Sigmoid colon (tissue), 7 donors: ENCODE measurements at regions of chr9 and their contacts with region 1.

Region 1: GRCh38 chr9:107489687-107490605 is at the start of gene KLF4:
- DNase-seq: peak; percentile 97
- H3K4me3 ChIP-seq: peak within 1 kb of the TSS; percentile 53 to 86 (median 65)
- H3K27ac ChIP-seq: peak within 1 kb of the TSS; percentile 84 to 96 (median 92)
- H3K4me1 ChIP-seq: peaks cover 0 to 38% (median 27%) of the 10 kb centered on the region in 4 donors
- H3K27me3 ChIP-seq: no peaks in the 10 kb centered on the region
- CTCF ChIP-seq: no peak
- EP300 ChIP-seq: peak in 3 of 4 donors; percentile 28 to 80 (median 74)
- POLR2A ChIP-seq: peak; percentile 38 to 58
- total RNA-seq, gene KLF4: 22.8 to 61.8 (median 34.7) TPM

Region 2: GRCh38 chr9:107260437-107261086 is 229.4 kb before region 1 on chr9:
- intact Hi-C with region 1: no loop called
- DNase-seq: no peak
- H3K4me3 ChIP-seq: no peak overlapping the region
- H3K27ac ChIP-seq: no peak overlapping the region
- H3K4me1 ChIP-seq: no peaks in the 10 kb centered on the region
- H3K27me3 ChIP-seq: no peaks in the 10 kb centered on the region
- CTCF ChIP-seq: no peak
- EP300 ChIP-seq: no peak
- POLR2A ChIP-seq: no peak

Region 3: GRCh38 chr9:107637421-107638420 is 147.8 kb after region 1 on chr9:
- intact Hi-C with region 1: loop called (anchors 1 kb)
- DNase-seq: peak; percentile 99
- H3K4me3 ChIP-seq: peak overlapping the region; percentile 35 to 56 (median 50)
- H3K27ac ChIP-seq: peak overlapping the region; percentile 85 to 99 (median 97)
- H3K4me1 ChIP-seq: peaks cover 0 to 21% (median 18%) of the 10 kb centered on the region in 4 donors
- H3K27me3 ChIP-seq: no peaks in the 10 kb centered on the region
- CTCF ChIP-seq: peak in 2 of 4 experiments; percentile 23 to 48
- EP300 ChIP-seq: peak in 3 of 4 donors; percentile 35 to 85 (median 55)
- POLR2A ChIP-seq: peak; percentile 94 to 97

Region 4: DNA sequence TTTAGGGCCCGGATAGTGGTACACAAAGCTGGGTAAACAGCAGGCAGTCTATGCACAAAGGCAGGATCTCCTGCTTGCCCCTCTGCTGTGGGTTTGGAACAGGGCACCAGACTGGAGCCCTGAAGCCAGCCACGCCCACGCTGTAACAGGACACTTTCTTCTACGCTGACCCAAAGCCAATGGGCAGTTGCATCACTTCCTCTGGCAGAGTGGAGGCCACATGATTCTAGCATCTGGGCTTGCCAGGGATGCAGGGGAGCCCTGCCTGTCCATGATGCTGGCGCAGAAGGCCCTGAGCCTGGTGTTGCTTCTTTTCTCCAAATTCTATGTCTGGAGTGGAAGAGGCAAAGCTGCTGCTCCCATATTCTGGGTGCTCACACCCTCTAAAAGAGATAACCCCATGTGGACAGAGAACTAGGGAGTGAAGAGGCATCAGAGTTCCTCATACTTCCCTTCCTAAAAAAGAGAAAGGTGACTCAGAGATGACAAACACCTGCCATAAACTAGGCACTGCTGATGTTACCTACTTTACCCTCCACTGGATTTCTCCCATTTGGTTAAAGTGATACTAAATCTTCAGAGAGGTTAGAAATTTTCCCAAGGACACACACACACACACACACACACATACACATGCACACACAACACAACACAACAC is 260.0 kb after region 1 on chr9:
- intact Hi-C with region 1: loop called (anchors 2 kb)
- DNase-seq: peak; percentile 96
- H3K4me3 ChIP-seq: no peak overlapping the region
- H3K27ac ChIP-seq: peak overlapping the region; percentile 75 to 88 (median 83)
- H3K4me1 ChIP-seq: peaks cover 0 to 36% (median 34%) of the 10 kb centered on the region in 4 donors
- H3K27me3 ChIP-seq: no peaks in the 10 kb centered on the region
- CTCF ChIP-seq: no peak
- EP300 ChIP-seq: peak in 2 of 4 donors; percentile 29 to 56
- POLR2A ChIP-seq: no peak

Region 5: GRCh38 chr9:108078811-108079210 is 588.9 kb after region 1 on chr9:
- intact Hi-C with region 1: no loop called
- DNase-seq: no peak
- H3K4me3 ChIP-seq: no peak overlapping the region
- H3K27ac ChIP-seq: no peak overlapping the region
- H3K4me1 ChIP-seq: peaks cover 0 to 3% (median 0%) of the 10 kb centered on the region in 4 donors
- H3K27me3 ChIP-seq: no peaks in the 10 kb centered on the region
- CTCF ChIP-seq: no peak
- EP300 ChIP-seq: no peak
- POLR2A ChIP-seq: no peak

Region 6: GRCh38 chr9:108142504-108143201 is 652.7 kb after region 1 on chr9:
- intact Hi-C with region 1: loop called (anchors 5 kb)
- DNase-seq: peak; percentile 97
- H3K4me3 ChIP-seq: no peak overlapping the region
- H3K27ac ChIP-seq: peak overlapping the region; percentile 77 to 92 (median 84)
- H3K4me1 ChIP-seq: peaks cover 0 to 25% (median 24%) of the 10 kb centered on the region in 4 donors
- H3K27me3 ChIP-seq: no peaks in the 10 kb centered on the region
- CTCF ChIP-seq: peak in 1 of 4 experiments; percentile 51
- EP300 ChIP-seq: peak; percentile 34 to 97 (median 85)
- POLR2A ChIP-seq: no peak

Region 7: GRCh38 chr9:108933718-108934322 is 1443.9 kb after region 1 on chr9 and contains the start of gene ELP1:
- intact Hi-C with region 1: loop called (anchors 10 kb)
- DNase-seq: peak; percentile 96
- H3K4me3 ChIP-seq: peak within 1 kb of the TSS; percentile 65 to 88 (median 72)
- H3K27ac ChIP-seq: peak within 1 kb of the TSS; percentile 88 to 92 (median 90)
- H3K4me1 ChIP-seq: peaks cover 0 to 27% (median 21%) of the 10 kb centered on the region in 4 donors
- H3K27me3 ChIP-seq: no peaks in the 10 kb centered on the region
- CTCF ChIP-seq: no peak
- EP300 ChIP-seq: no peak
- POLR2A ChIP-seq: peak; percentile 18 to 48
- total RNA-seq, gene ELP1: 11.0 to 17.2 (median 15.3) TPM